Sciatic nerve (tissue), 2 donors: ENCODE measurements at regions of chr3 and their contacts with region 1.

Region 1: GRCh38 chr3:156816800-156817645 is 9.1 kb upstream of the LEKR1 start:
- DNase-seq: peak; percentile 86
- ATAC-seq: peak; percentile 87

Region 2: DNA sequence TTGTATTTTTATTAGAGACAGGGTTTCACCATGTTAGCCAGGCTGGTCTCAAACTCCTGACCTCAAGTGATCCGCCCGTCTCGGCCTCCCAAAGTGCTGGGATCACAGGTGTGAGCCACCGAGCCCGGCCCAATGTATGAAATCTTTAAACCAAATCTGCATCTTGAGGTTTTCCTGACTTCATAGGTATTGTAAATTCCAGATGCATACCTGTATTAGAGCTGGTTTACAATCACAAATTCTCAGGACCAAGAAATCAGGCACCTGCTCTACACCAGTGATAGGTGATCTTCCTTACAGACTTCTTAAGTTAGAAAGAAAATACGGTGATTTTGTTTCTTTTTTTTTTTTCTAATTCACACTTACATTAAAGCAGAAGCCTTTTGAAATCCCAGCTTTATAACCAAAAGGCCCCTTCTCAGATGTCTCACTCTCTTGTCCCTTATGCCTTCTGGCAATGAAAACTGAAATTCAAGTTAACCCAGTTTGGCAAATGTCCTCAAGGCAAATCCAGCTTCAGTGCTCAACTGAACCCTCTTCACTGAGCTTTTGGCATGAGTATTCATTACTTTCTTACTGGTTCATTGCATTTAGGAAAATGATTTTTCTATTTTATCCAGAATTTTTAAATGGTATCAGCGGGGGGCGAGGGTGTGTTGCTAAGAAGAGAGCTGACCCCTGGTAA is 1089.3 kb before region 1 on chr3:
- intact Hi-C with region 1: no loop called
- DNase-seq: no peak
- ATAC-seq: no peak

Region 3: DNA sequence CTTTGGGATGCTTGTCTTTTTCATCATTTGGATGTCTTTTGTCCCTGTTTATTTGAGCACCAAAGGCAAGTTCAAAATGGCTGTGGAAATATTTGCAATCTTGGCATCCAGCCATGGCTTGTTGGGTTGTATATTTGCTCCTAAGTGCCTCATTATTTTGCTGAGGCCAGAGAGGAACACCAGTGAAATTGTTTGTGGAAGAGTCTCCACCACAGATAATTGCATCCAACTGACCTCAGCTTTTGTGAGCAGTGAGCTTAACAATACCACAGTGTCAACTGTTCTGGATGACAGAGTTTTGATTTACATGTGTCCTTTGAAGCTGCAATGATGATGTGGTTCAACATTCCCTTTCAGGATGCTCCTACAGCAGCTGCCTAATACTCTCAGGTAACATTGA is 779.7 kb before region 1 on chr3:
- intact Hi-C with region 1: loop called (anchors 5 kb)
- DNase-seq: no peak
- ATAC-seq: no peak

Region 4: DNA sequence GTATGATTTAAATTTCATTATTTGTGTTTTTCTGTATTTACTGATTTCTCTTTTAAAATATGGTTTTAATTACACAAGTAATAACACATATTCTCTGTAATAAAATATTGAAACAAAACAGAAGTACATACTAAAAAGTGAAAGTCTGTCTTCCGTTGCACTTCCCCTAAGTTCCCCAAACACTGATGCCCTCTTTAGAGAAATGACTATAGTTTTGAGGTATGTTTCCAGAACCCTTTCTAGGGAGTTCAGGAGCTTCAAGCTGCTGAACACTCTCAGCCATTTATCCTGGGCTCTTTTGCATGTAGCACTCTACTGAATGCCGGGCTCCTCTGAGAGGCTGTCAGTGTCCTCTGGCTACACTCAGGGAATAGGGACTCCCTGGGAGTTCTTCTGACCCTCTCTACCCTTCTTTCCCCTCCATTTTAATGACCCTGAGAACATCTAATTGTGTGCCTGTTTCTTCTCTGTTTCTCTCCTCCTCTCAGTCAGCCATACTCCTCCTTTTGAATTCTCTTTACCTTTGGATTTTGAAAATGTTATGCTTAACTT is 757.0 kb before region 1 on chr3:
- intact Hi-C with region 1: no loop called
- DNase-seq: no peak
- ATAC-seq: no peak

Region 5: GRCh38 chr3:156586905-156587759 is 229.9 kb before region 1 on chr3:
- intact Hi-C with region 1: no loop called
- DNase-seq: no peak
- ATAC-seq: peak; percentile 50

Region 6: GRCh38 chr3:157520485-157521150 is 703.6 kb after region 1 on chr3:
- intact Hi-C with region 1: no loop called
- DNase-seq: no peak
- ATAC-seq: peak; percentile 89